ENCODE measurements at regions of chrX and their contacts with region 1.

Region 1: GRCh38 chrX:67587946-67588624 is 44.3 kb downstream of the AR start:
- DNase-seq: no peak
- ATAC-seq: no peak
- H3K4me3 ChIP-seq: no peak overlapping the region
- H3K4me3 Mint-ChIP-seq: no peak overlapping the region
- H3K27ac ChIP-seq: no peak overlapping the region
- H3K27ac Mint-ChIP-seq: no peak overlapping the region
- H3K4me1 ChIP-seq: no peaks in the 10 kb centered on the region
- H3K4me1 Mint-ChIP-seq: no peaks in the 10 kb centered on the region
- H3K27me3 ChIP-seq: no peaks in the 10 kb centered on the region
- H3K27me3 Mint-ChIP-seq: no peaks in the 10 kb centered on the region
- CTCF ChIP-seq: no peak

Region 2: DNA sequence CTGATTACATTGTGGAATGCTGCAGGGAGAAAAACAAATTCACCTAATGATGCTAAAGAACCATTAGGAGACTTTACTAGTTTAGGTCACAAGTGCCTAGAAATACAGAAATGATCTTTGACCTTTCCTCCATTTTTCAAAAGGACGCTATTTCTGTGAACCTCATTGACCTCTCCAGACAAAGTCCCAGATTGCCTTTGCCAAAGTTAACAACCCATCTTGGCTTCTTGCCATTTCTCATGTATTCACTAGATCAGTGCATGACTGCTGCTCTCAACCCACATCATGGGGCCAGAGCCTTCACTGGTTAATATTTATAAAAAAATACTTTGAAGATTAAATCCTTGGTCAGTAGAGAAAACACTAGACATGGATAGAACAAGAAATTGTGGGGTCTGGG is 64.2 kb before region 1 on chrX:
- CTCF ChIA-PET with region 1: no interaction called
- POLR2A ChIA-PET with region 1: no interaction called
- intact Hi-C with region 1: loop called in 1 of 2 experiments (anchors 10 kb)
- DNase-seq: no peak
- ATAC-seq: no peak
- H3K4me3 ChIP-seq: no peak overlapping the region
- H3K4me3 Mint-ChIP-seq: no peak overlapping the region
- H3K27ac ChIP-seq: no peak overlapping the region
- H3K27ac Mint-ChIP-seq: no peak overlapping the region
- H3K4me1 ChIP-seq: no peaks in the 10 kb centered on the region
- H3K4me1 Mint-ChIP-seq: no peaks in the 10 kb centered on the region
- H3K27me3 ChIP-seq: no peaks in the 10 kb centered on the region
- H3K27me3 Mint-ChIP-seq: no peaks in the 10 kb centered on the region
- CTCF ChIP-seq: no peak

Region 3: GRCh38 chrX:67535521-67535920 is 52.6 kb before region 1 on chrX:
- CTCF ChIA-PET with region 1: no interaction called
- POLR2A ChIA-PET with region 1: no interaction called
- intact Hi-C with region 1: no loop called
- DNase-seq: no peak
- ATAC-seq: no peak
- H3K4me3 ChIP-seq: no peak overlapping the region
- H3K4me3 Mint-ChIP-seq: no peak overlapping the region
- H3K27ac ChIP-seq: no peak overlapping the region
- H3K27ac Mint-ChIP-seq: no peak overlapping the region
- H3K4me1 ChIP-seq: no peaks in the 10 kb centered on the region
- H3K4me1 Mint-ChIP-seq: no peaks in the 10 kb centered on the region
- H3K27me3 ChIP-seq: no peaks in the 10 kb centered on the region
- H3K27me3 Mint-ChIP-seq: peaks cover 3% of the 10 kb centered on the region
- CTCF ChIP-seq: no peak

Measured in CD8-positive, alpha-beta T cell (primary cell).